ENCODE measurements at regions of chr19 and their contacts with region 1.

Region 1: DNA sequence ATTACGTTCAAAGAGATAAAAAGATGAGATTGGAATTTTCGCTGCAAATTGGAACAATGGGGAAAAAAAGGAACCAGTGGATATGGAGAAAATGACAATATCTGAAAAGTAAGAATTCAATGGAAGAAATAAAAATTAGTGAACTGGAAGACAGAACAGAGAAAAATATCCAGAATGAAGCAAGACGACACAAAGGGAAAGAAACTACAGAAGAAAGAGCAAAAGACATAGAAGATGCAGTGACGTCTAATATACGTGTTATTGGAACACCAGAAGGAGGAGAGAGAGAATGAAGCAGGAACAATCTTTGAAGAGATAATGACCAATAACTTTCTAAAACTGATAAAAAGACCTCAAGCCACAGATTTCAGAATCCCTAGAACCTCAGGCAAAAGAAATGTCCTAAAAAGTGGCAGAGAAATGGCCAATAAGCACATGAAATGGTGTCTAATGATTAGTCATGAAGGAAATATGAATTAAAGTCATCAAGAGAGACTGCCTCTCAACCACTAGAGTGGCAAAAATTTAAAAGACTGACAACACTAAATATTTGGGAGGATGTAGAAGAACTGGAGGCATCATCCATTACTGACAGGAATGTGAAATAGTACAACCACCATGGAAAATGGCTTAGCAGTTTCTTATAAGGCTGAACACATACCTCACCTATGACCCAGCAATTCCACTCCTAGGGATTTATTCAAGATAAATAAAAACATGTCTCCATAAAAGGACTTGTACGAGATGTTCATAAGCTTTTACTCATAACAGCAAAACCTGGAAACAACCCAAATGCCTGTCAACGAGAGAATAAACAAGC is 56.5 kb downstream of the GADD45B start:
- DNase-seq: no peak
- H3K4me3 ChIP-seq: no peak overlapping the region
- H3K27ac ChIP-seq: peak overlapping the region in 4 of 8 donors; percentile 7 to 48 (median 32)
- H3K4me1 ChIP-seq: peaks cover 0 to 24% (median 16%) of the 10 kb centered on the region in 6 donors
- H3K27me3 ChIP-seq: no peaks in the 10 kb centered on the region
- CTCF ChIP-seq: no peak
- POLR2A ChIP-seq: no peak

Region 2: GRCh38 chr19:1975162-1975480 is 557.3 kb before region 1 on chr19:
- intact Hi-C with region 1: no loop called
- DNase-seq: no peak
- H3K4me3 ChIP-seq: no peak overlapping the region
- H3K27ac ChIP-seq: no peak overlapping the region
- H3K4me1 ChIP-seq: peaks cover 0 to 26% (median 2%) of the 10 kb centered on the region in 6 donors
- H3K27me3 ChIP-seq: no peaks in the 10 kb centered on the region
- CTCF ChIP-seq: no peak
- POLR2A ChIP-seq: no peak

Region 3: DNA sequence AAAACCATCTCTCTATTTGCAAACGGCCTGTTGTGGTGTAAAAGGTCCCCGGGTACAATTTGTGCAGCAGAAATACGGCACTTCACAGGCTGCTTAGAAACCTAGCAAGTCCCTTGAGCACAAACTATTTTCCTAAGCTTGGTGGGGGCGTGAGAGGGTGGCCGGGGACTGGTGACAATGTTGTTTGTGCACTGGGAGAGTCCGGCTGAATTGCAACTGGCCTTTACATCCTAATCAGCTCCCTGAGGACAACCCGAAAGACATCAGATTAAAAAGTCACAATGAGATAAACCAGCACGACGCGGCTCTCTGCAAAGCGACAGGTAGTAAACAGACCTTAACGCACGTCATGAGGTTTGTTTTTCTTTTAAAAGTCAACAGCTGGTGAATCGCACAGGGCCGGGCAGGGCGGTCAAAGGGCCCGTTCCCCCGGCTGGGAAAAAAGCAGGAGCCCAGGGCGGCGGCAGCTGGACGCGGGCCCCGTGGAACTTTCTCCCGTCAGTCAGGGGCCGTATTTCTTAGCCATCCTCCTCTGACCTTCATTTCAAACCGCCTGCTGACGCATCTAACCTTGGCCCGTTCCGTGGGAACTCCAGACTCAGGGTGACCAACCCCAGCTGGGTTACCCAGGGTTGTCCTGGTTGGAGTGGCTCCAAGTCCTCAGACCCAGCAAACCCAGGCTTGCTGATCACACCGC is 55.8 kb after region 1 on chr19:
- intact Hi-C with region 1: loop called (anchors 10 kb)
- DNase-seq: peak; percentile 55
- H3K4me3 ChIP-seq: peak overlapping the region in 1 of 8 donors; percentile 15
- H3K27ac ChIP-seq: peak overlapping the region in 6 of 8 donors; percentile 25 to 67 (median 52)
- H3K4me1 ChIP-seq: peaks cover 0 to 33% (median 22%) of the 10 kb centered on the region in 6 donors
- H3K27me3 ChIP-seq: no peaks in the 10 kb centered on the region
- CTCF ChIP-seq: no peak
- POLR2A ChIP-seq: no peak

Measured in spleen (tissue), 13 donors.